ENCODE measurements at regions of chr15 and their contacts with region 1.

Region 1: DNA sequence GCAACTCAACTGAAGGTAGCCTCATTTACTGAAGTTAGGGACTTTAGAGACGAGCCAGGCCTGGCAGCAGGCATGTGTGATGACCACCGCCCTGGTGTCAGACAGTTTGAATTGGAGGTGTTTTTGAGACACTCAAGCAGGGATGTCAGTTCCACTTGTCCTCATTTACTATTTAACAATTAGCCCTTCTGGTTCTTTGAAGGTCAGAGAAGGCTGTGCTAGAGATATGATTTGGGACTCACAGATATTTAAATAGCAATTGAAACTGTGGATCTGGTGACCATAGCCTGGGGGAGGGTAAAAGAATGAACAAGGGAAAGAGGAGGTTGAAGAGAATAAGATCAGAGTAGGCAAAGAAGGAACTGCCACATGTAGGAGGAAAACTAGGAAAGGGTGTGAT is 74.6 kb downstream of the REC114 start:
- DNase-seq: no peak
- ATAC-seq: no peak
- H3K4me3 ChIP-seq: no peak overlapping the region
- H3K27ac ChIP-seq: no peak overlapping the region
- H3K4me1 ChIP-seq: no peaks in the 10 kb centered on the region
- H3K27me3 ChIP-seq: no peaks in the 10 kb centered on the region

Region 2: DNA sequence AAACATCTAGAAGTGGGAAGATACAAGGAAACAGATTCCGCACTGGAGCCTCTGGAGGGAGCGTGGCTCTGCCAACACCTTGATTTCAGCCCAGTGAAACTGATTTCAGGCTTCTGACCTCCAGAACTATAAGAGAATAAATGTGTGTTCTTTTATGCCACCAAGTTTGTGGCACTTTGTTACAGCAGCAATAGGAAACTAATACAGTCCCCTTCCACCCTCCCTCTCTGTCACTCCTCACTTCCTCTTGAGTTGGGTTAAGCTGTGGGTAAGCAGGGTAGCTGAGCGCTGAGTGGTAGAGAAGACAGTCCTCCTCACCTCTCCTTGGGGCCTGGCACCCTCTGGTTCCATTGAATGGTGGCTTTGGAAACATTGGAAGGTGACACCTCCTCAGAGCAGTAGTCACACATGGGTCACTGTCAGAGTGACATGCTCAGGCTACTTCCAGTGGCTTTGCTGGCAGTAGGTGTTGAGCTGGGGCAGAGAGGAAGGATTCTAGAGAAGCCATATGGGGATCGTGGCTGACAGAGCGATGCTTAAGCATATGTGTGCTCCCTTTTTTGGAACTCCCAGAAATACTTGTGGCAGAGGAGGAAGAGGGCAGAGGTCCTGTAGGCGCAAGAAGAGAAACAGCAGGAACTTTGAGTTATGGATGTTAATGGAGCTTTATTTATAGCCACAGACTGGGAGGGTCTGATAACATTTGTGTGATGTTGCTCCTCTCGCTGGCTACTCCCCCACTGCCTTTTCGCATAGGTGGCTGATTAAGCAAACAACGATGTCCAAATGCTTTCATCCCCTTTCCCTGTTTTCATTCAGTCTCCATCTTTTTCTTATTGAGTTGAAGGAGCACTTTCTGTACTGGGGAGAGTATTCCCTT is 134.0 kb before region 1 on chr15:
- intact Hi-C with region 1: no loop called
- DNase-seq: peak in 1 of 2 donors; percentile 22
- ATAC-seq: no peak
- H3K4me3 ChIP-seq: no peak overlapping the region
- H3K27ac ChIP-seq: no peak overlapping the region
- H3K4me1 ChIP-seq: no peaks in the 10 kb centered on the region
- H3K27me3 ChIP-seq: no peaks in the 10 kb centered on the region

Region 3: DNA sequence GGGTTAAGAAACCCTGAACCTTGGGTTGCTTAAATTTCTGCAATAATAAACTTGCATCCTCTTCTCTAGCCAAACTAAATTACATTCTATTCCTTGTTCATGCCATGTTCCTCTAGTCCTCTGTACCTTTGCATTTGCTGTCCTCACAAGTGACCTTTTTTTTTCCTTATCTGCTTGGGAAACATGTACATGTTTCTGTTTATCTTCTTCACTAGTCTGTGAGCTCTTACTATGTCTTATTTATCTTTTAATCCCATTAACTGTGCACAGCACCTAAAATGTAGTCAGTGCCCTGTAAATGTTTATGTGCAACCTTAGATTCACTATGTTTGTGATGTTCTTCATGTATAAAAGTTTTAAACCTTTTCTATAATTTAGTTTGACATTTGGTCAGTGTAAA is 12.7 kb before region 1 on chr15:
- intact Hi-C with region 1: loop called in 1 of 2 experiments (anchors 2 kb)
- DNase-seq: no peak
- ATAC-seq: no peak
- H3K4me3 ChIP-seq: no peak overlapping the region
- H3K27ac ChIP-seq: no peak overlapping the region
- H3K4me1 ChIP-seq: no peaks in the 10 kb centered on the region
- H3K27me3 ChIP-seq: no peaks in the 10 kb centered on the region